Naive thymus-derived CD4-positive, alpha-beta T cell (primary cell): ENCODE measurements at regions of chr1 and their contacts with region 1.

Region 1: DNA sequence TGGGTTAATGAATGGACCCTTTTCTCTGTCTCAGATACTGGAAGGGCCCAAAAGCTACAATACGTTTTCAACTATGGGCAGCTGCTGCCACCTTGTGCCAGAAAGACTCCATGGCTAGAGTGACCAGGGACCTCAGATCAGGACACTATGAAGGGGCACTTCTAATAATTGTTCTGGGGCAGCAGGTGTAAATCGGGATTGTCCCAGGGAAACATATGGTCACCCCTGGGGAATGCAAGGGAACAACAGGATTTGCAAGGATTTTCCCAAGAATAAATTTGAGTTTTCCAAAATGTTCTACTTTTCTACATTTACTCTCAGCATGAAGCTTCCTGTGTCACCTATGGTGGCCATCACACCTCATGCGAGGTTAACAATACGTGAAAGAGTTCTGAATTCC is 12.0 kb upstream of the FCAMR start:
- DNase-seq: peak; percentile 29 to 64 (median 52)
- ATAC-seq: peak; percentile 83
- H3K4me3 ChIP-seq: no peak overlapping the region
- H3K4me3 Mint-ChIP-seq: no peak overlapping the region
- H3K27ac ChIP-seq: no peak overlapping the region
- H3K27ac Mint-ChIP-seq: no peak overlapping the region
- H3K4me1 ChIP-seq: no peaks in the 10 kb centered on the region
- H3K4me1 Mint-ChIP-seq: peaks cover 0 to 3% (median 0%) of the 10 kb centered on the region in 7 donors
- H3K27me3 ChIP-seq: peaks cover 0 to 4% of the 10 kb centered on the region in 2 donors
- H3K27me3 Mint-ChIP-seq: peaks cover 0 to 59% (median 14%) of the 10 kb centered on the region in 5 donors

Region 2: DNA sequence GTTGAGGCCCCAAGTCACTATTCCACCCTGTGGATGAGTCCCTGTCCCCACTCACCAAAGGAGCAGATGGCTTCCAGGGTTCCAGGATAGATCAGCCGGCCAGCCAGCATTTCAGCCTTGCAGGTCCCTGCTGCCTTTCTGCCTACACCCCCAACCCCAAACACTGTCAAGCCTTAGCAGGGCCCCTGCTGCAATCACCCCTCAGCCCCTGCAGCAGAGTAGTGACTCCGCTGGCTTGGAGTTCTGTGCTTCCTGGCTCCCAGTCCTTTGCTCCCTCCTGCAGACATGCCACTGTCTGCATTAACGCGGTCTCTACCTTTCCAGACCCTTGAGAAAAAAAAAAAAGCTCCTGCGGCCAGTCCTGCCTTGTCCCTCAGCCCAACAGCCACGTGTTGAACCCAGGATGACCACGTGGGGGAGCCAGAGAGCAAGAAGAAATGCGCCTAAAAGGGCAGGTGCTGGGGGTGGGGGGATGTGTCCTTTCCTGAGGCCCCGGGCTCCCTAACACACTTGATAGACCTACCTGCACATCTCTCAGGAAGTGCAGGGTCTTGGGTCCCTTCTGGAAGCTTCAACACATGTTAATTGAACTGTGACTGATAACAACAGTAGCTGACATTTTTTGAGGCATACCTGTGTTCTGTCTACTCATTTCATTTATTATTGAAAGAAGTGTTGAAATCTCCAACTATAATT is 437.5 kb before region 1 on chr1:
- CTCF ChIA-PET with region 1: interaction called, 5 read pairs
- POLR2A ChIA-PET with region 1: no interaction called
- intact Hi-C with region 1: loop called in 1 of 2 experiments (anchors 5 kb)
- DNase-seq: peak; percentile 58 to 86 (median 77)
- ATAC-seq: peak; percentile 94
- H3K4me3 ChIP-seq: no peak overlapping the region
- H3K4me3 Mint-ChIP-seq: no peak overlapping the region
- H3K27ac ChIP-seq: no peak overlapping the region
- H3K27ac Mint-ChIP-seq: peak overlapping the region in 7 of 9 donors; percentile 17 to 63 (median 49)
- H3K4me1 ChIP-seq: peaks cover 4 to 9% of the 10 kb centered on the region in 2 donors
- H3K4me1 Mint-ChIP-seq: peaks cover 12 to 26% (median 19%) of the 10 kb centered on the region in 7 donors
- H3K27me3 ChIP-seq: no peaks in the 10 kb centered on the region
- H3K27me3 Mint-ChIP-seq: no peaks in the 10 kb centered on the region

Region 3: DNA sequence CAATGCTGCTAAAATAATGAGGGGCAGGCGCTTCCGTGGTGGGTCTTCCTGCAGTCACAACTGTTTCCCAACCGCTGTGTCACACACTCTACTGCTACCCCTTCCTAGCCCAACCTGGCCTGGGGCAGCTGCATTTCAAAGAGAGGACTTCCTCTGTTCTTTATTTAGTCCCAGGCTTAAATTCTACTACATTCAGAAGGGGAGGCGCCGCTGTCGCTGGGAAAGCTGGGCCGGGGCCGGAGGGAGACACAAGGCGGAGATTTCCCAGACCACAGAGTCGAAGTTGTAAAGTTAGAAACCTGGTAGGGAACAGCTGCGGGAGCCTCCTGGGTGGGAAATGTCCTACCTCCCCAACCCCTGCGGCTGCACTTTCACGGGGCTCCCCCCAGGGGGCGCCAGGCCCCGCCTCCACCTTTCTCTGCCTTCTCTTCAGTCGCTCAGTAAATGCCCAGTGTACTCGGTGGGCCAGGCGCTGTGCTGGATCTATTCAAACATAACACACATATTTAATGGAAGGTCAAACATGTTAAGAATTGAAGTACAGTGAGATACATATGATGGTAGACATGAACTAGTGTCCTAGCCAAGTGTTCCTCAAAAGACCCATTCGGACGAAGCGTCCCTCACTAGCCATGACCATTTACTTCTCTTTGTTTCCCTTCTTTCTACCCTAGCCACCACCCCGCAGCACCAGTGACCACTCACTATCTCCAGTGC is 323.8 kb before region 1 on chr1:
- CTCF ChIA-PET with region 1: interaction called, 5 read pairs
- POLR2A ChIA-PET with region 1: no interaction called
- intact Hi-C with region 1: loop called in 1 of 2 experiments (anchors 2 kb)
- DNase-seq: peak; percentile 17 to 69 (median 43)
- ATAC-seq: peak; percentile 95
- H3K4me3 ChIP-seq: no peak overlapping the region
- H3K4me3 Mint-ChIP-seq: peak overlapping the region in 1 of 10 donors; percentile 62
- H3K27ac ChIP-seq: no peak overlapping the region
- H3K27ac Mint-ChIP-seq: peak overlapping the region in 1 of 9 donors; percentile 51
- H3K4me1 ChIP-seq: no peaks in the 10 kb centered on the region
- H3K4me1 Mint-ChIP-seq: peaks cover 5 to 20% (median 10%) of the 10 kb centered on the region in 7 donors
- H3K27me3 ChIP-seq: peaks cover 0 to 4% of the 10 kb centered on the region in 2 donors
- H3K27me3 Mint-ChIP-seq: peaks cover 13 to 42% (median 37%) of the 10 kb centered on the region in 5 donors

Region 4: DNA sequence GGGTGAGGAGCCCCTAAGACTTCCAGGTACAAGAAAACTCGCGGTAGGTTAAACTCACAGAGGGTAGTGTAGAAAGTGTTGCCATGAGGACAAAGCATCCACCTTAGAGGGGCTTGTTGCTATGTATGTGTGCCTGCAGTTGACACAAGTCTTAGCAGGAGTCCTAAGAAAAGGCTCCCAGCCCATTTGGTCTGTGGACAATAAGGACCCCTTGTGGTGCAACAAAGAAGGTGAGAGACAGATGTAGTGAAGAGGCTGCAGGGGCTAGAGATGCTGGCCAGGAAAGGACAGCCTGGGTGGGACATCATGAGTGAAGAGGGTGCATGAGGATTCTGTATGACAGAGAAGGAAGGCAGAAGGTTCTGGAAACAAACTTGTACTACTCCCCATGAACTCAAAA is 173.6 kb before region 1 on chr1:
- CTCF ChIA-PET with region 1: interaction called, 48 read pairs
- POLR2A ChIA-PET with region 1: interaction called, 6 read pairs
- intact Hi-C with region 1: loop called (anchors 1 kb)
- DNase-seq: peak in 7 of 9 donors; percentile 47 to 71 (median 58)
- ATAC-seq: peak; percentile 90
- H3K4me3 ChIP-seq: no peak overlapping the region
- H3K4me3 Mint-ChIP-seq: peak overlapping the region in 1 of 10 donors; percentile 8
- H3K27ac ChIP-seq: no peak overlapping the region
- H3K27ac Mint-ChIP-seq: peak overlapping the region in 8 of 9 donors; percentile 17 to 76 (median 51)
- H3K4me1 ChIP-seq: peaks cover 30 to 42% of the 10 kb centered on the region in 2 donors
- H3K4me1 Mint-ChIP-seq: peaks cover 24 to 61% (median 52%) of the 10 kb centered on the region in 7 donors
- H3K27me3 ChIP-seq: no peaks in the 10 kb centered on the region
- H3K27me3 Mint-ChIP-seq: peaks cover 0 to 12% (median 0%) of the 10 kb centered on the region in 5 donors

Region 5: DNA sequence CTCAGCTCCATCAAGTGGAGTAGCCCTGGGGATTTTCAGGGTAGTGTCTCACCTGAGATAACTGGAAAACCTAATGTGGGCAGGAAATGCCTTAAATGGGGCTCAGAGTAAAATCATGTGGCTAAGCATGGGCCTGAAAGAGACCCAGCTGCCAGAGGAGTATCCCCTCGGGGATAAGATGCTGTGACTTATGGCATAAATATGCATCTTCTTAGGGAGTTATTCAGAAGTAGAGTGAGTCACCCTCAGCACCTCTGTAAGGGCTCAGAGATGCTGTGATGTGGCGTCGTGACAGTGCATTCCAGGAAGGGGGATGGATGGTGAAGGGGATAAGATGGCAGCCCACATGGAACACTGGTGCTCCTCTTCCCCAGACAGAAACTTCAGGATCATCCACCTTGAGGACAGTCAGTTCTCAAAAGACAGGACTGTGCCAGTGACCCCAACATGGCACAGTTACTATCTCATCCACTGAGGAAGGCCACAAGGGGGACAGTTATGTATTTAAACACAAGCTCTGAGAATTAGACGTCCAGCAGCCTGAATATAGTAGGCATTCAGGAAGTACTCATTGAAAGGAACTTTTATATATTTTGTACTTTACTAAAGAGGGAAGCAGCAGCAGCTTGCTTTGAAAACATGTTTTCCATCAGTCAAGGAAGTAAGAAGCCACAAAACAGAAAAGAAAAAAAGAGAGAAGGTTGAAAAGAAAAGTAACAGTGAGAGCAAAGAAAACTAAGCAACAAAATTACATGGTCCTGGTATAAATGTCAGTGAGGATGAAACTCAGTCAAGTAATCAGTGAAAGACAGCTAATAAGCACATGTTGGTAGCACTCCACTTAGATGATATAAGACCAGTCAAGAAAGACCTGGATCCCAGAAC is 76.7 kb before region 1 on chr1:
- CTCF ChIA-PET with region 1: interaction called, 14 read pairs
- POLR2A ChIA-PET with region 1: interaction called, 3 read pairs
- intact Hi-C with region 1: no loop called
- DNase-seq: peak in 7 of 9 donors; percentile 38 to 64 (median 59)
- ATAC-seq: peak; percentile 32
- H3K4me3 ChIP-seq: peak overlapping the region; percentile 17
- H3K4me3 Mint-ChIP-seq: peak overlapping the region; percentile 60 to 88 (median 78)
- H3K27ac ChIP-seq: peak overlapping the region; percentile 69
- H3K27ac Mint-ChIP-seq: peak overlapping the region; percentile 79 to 98 (median 93)
- H3K4me1 ChIP-seq: peaks cover 28 to 72% of the 10 kb centered on the region in 2 donors
- H3K4me1 Mint-ChIP-seq: peaks cover 52 to 94% (median 86%) of the 10 kb centered on the region in 7 donors
- H3K27me3 ChIP-seq: no peaks in the 10 kb centered on the region
- H3K27me3 Mint-ChIP-seq: peaks cover 0 to 6% (median 0%) of the 10 kb centered on the region in 5 donors

Region 6: DNA sequence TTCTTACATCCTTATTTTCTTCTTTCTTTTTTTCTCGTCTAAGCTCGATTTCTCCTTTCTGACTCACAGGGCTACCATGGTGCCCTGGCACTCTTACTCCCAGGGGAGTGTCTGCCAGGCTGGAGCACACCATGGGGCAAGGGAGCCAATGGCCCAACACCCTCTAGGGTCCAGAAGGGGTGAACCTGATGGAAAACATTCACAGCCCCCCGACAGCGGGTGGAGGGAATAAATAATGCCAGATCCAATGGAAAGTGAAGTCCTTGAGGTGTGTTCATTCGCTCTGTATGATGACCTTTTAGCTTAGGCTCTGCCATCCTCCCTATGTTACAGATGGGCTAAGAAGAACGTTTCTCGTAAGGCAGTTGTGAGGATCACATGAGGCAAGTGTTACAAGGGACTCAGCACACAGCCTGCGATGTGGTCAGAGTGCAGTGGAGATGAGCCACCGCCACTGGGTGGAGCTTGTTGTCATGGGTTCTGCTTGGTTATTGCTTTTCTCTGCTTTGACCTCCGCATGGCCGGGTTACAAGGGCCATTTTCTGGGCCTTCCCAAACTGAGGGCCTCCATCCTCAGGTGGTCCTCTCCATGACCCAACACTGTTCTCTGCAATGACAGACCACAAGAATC is 57.0 kb before region 1 on chr1:
- CTCF ChIA-PET with region 1: interaction called, 93 read pairs
- POLR2A ChIA-PET with region 1: interaction called, 12 read pairs
- intact Hi-C with region 1: loop called (anchors 2 to 5 kb)
- DNase-seq: peak in 3 of 9 donors; percentile 25 to 38 (median 37)
- ATAC-seq: peak; percentile 62
- H3K4me3 ChIP-seq: no peak overlapping the region
- H3K4me3 Mint-ChIP-seq: no peak overlapping the region
- H3K27ac ChIP-seq: peak overlapping the region; percentile 90
- H3K27ac Mint-ChIP-seq: no peak overlapping the region
- H3K4me1 ChIP-seq: peaks cover 46 to 51% of the 10 kb centered on the region in 2 donors
- H3K4me1 Mint-ChIP-seq: peaks cover 19 to 37% (median 31%) of the 10 kb centered on the region in 7 donors
- H3K27me3 ChIP-seq: no peaks in the 10 kb centered on the region
- H3K27me3 Mint-ChIP-seq: no peaks in the 10 kb centered on the region

Region 7: DNA sequence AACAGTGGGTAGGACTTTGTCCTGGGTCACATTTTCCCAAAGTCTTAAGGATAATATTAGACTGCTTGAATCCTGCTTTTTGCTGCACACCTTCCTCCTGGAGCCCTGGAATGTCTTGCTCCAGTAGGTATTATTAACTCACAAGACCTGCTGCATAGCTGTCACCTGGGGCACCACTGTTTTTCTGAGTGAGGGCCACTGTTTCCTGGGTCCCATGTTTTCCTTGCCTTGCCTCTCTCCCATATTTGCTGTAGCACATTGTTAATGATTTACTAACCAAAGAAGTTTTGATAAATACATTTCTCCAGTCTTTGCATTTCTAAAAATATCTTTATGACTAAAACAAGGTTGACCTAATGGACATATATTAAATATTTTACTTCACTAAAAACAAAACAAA is 10.6 kb after region 1 on chr1:
- CTCF ChIA-PET with region 1: interaction called, 10 read pairs
- POLR2A ChIA-PET with region 1: interaction called, 3 read pairs
- intact Hi-C with region 1: no loop called
- DNase-seq: no peak
- ATAC-seq: no peak
- H3K4me3 ChIP-seq: no peak overlapping the region
- H3K4me3 Mint-ChIP-seq: no peak overlapping the region
- H3K27ac ChIP-seq: no peak overlapping the region
- H3K27ac Mint-ChIP-seq: peak overlapping the region in 1 of 9 donors; percentile 67
- H3K4me1 ChIP-seq: no peaks in the 10 kb centered on the region
- H3K4me1 Mint-ChIP-seq: peaks cover 0 to under 1% (median 0%) of the 10 kb centered on the region in 7 donors
- H3K27me3 ChIP-seq: peaks cover 0 to 3% of the 10 kb centered on the region in 2 donors
- H3K27me3 Mint-ChIP-seq: peaks cover 4 to 81% (median 18%) of the 10 kb centered on the region in 5 donors

Region 8: DNA sequence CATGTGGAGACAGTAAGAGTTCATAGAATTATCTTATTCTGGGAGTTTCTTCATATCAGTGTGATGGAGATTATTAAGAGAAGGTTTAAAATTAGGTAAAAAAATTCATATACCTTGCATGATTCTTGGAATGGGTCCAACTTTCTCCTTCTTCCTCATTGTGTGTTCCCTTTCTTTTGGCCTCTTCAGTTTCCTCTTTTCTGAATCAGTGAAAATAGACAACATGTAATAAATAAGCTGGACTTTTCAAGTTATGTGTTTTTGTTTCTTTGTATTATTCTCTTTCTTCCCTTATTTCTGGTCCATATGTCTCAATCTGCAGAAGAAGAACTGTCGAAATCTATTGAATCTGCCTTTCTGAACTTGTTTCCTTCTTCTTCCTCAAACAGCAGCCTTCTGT is 152.4 kb after region 1 on chr1:
- CTCF ChIA-PET with region 1: no interaction called
- POLR2A ChIA-PET with region 1: no interaction called
- intact Hi-C with region 1: no loop called
- DNase-seq: no peak
- ATAC-seq: peak; percentile 29
- H3K4me3 ChIP-seq: no peak overlapping the region
- H3K4me3 Mint-ChIP-seq: no peak overlapping the region
- H3K27ac ChIP-seq: no peak overlapping the region
- H3K27ac Mint-ChIP-seq: no peak overlapping the region
- H3K4me1 ChIP-seq: no peaks in the 10 kb centered on the region
- H3K4me1 Mint-ChIP-seq: no peaks in the 10 kb centered on the region
- H3K27me3 ChIP-seq: no peaks in the 10 kb centered on the region
- H3K27me3 Mint-ChIP-seq: peaks cover 0 to 3% (median 0%) of the 10 kb centered on the region in 5 donors

Region 9: DNA sequence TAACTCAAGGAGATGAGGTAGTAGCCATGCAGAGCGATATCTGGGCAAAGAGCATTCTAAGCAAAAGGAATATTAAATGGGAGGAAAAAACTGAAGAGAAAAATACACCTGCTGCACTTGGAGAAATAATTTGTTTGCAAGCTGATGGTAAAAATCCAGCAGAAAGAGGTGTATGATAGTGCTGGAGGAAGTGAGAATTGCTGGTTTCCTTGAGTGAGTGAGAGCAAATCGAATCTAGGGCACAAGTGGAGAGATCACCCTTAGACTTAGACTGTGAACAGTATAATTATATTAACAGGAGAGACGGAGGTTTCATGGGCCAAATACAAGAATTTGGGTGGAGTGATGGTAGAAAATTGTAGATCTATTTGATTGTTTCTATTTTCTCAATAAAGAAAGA is 511.0 kb after region 1 on chr1:
- CTCF ChIA-PET with region 1: no interaction called
- POLR2A ChIA-PET with region 1: no interaction called
- intact Hi-C with region 1: no loop called
- DNase-seq: no peak
- ATAC-seq: no peak
- H3K4me3 ChIP-seq: no peak overlapping the region
- H3K4me3 Mint-ChIP-seq: no peak overlapping the region
- H3K27ac ChIP-seq: no peak overlapping the region
- H3K27ac Mint-ChIP-seq: no peak overlapping the region
- H3K4me1 ChIP-seq: peaks cover 0 to 6% of the 10 kb centered on the region in 2 donors
- H3K4me1 Mint-ChIP-seq: peaks cover 6 to 17% (median 8%) of the 10 kb centered on the region in 7 donors
- H3K27me3 ChIP-seq: peaks cover 0 to 3% of the 10 kb centered on the region in 2 donors
- H3K27me3 Mint-ChIP-seq: peaks cover 5 to 29% (median 14%) of the 10 kb centered on the region in 5 donors